ENCODE measurements at regions of chr12 and their contacts with region 1.

Region 1: DNA sequence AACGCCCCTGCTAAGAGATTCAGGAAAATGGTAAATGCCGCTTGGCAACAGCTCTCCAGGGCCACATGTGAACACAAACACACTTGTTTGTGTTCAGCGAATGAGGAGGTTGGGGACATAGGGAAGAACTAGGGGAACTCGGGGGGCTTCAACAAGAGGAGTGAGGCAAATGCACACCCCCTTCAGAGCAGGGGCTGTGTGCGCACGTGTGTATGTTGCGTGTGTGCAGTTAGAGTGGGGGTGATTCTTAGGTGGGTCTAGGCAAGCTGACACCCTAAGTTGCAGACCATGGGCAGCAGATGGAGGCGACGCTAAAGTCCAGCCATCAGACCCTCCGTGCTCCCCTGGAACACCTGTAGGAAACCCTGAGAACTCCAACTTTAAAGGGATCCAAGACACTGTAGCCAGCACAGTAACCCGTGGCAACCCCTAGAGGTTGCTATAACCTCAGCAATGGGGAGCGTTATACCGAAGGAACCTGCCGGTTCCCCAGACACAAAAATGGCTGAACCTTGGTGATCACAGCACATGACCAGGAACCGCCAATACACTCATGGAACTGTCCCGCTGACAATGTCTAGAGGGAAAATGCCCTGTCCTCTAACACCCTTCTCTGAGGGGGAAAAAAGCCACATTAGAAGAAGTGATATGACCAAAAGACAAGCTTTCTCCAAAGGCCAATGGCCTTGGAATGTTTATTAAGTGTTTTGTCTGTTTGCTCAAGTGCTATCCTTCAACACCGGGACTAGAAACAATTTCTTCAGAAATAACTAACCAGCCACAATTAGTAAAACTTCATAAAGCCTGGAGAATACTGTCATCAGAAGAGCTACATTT is 86.5 kb upstream of the CEP83 start:
- DNase-seq: peak in 2 of 3 donors; percentile 63 to 73
- ATAC-seq: peak; percentile 96
- H3K4me3 ChIP-seq: no peak overlapping the region
- H3K4me1 ChIP-seq: no peaks in the 10 kb centered on the region
- CTCF ChIP-seq: peak; percentile 71

Region 2: GRCh38 chr12:94762259-94762942 is 216.2 kb after region 1 on chr12:
- intact Hi-C with region 1: loop called in 1 of 2 experiments (anchors 10 kb)
- DNase-seq: no peak
- ATAC-seq: peak; percentile 88
- H3K4me3 ChIP-seq: no peak overlapping the region
- H3K4me1 ChIP-seq: peaks cover 6% of the 10 kb centered on the region
- CTCF ChIP-seq: no peak

Region 3: DNA sequence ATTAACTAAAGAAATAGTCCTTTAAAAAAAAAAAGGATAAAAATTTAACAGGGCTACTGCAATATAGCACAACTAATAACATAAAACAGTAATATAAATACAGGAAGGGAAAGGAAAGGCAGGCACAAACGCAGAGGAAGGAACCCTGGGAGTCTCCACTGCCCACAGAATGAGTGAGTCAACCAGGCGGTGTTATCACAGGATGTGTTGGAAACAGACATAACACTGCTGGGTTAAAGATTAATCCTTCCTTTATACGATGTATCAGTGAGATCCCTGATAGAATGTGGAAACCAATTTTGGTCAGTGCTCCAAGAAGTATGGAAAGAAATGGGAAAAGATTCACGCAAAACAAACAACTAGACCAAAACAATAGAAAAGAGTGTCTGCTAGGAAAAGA is 623.2 kb after region 1 on chr12:
- intact Hi-C with region 1: no loop called
- DNase-seq: peak in 1 of 3 donors; percentile 67
- ATAC-seq: peak; percentile 97
- H3K4me3 ChIP-seq: no peak overlapping the region
- H3K4me1 ChIP-seq: peaks cover 11% of the 10 kb centered on the region
- CTCF ChIP-seq: no peak